PC-3 (cell line): ENCODE measurements at regions of chr17 and their contacts with region 1.

Region 1: DNA sequence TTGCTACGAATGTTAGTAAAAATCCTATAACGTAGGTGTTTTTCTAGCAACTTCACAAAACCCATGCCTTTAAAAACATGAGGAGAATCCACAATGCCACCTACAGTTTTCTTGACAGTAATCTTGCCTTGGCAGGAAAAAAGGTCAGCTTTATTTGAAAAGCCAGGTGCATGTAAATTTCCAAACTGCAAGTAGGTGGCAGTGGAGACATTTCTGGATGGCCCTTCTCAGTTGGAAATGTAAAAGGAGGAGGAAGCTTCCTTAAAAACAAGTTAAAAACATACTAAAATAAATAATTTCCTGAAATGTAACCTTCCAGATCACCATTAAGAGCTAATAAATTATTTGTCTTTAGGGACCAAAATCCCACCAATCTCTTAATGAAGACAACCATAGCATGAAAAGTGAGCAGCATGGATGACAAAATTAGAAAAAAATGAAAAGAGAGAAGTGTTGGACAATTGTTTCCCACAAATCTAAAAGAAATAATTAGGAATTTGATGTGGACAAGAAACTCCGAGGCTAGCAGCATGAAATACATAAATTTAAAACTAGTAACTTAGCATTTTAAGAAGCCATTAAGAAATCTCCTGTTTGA is 152.2 kb downstream of the SNX11 start:
- DNase-seq: peak; percentile 87
- ATAC-seq: peak; percentile 50
- H3K4me3 ChIP-seq: no peak overlapping the region
- H3K27ac ChIP-seq: no peak overlapping the region
- H3K4me1 ChIP-seq: peaks cover 17% of the 10 kb centered on the region
- H3K27me3 ChIP-seq: no peaks in the 10 kb centered on the region
- CTCF ChIP-seq: peak; percentile 95

Region 2: DNA sequence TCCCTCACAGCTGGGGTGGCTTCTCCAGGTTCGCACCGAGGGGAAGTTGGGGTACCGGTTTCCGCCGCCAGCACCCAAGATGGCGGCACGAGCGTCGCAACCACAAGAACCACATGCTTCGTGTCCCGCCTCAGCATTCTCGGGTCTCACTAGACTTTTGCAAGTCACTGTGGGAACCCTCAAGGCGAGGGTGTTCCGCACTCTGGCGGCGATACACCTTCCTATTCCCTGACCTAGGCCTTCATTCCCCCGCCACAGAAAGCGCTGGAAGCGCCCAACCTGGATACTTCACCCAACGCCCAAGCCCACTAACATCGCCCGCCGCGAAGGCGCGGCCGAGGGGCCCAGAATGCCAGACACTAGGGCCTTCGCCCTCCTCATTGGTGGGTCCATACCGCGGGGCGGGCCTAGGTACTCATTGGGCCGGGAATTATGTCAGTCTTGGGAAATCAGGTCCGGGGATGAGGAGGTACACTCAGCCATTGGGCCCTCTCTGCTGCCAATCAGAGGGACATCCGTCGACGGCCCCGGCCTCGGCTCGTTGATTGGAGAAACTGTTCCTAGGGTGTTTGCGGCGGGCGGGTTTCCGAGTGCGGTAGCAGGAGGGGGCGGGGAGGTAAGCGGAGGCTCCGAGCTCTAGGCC is 211.9 kb before region 1 on chr17 and contains the start of gene NFE2L1:
- CTCF ChIA-PET with region 1: interaction called, 19 read pairs
- POLR2A ChIA-PET with region 1: no interaction called
- intact Hi-C with region 1: no loop called
- DNase-seq: peak; percentile 100
- ATAC-seq: peak; percentile 89
- H3K4me3 ChIP-seq: peak within 1 kb of the TSS; percentile 69
- H3K27ac ChIP-seq: peak within 1 kb of the TSS; percentile 92
- H3K4me1 ChIP-seq: peaks cover 60% of the 10 kb centered on the region
- H3K27me3 ChIP-seq: no peaks in the 10 kb centered on the region
- CTCF ChIP-seq: no peak
- total RNA-seq, gene NFE2L1: 45.1 and 72.6 TPM in 2 replicates

Region 3: DNA sequence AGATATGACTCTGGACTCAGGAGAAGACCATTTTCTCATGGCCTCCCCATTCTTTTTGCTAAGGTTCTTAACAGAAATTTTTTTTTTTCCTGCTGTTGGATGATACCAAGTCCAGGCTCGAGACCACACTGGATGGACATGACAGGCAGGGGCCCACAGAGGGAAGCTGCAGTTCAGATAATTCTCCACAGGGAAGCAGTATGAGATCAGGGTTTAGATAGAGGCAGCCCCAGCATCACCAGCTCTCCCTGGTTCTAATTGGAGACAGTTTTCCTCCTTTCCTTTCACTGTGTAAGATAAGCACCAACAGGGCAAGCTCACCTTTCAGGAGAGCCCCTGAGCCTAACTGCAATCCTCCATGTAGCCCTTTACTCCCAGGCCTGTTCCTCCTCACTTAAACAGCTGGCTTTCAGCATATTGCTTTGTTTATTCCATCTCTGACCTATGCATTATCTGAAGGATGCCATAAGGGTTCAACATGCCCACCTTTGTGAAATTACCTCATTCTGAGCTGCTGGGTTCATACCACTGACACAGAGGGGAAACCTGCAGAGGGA is 44.1 kb before region 1 on chr17:
- CTCF ChIA-PET with region 1: interaction called, 25 read pairs
- POLR2A ChIA-PET with region 1: no interaction called
- intact Hi-C with region 1: loop called (anchors 1 kb)
- DNase-seq: peak; percentile 83
- ATAC-seq: peak; percentile 99
- H3K4me3 ChIP-seq: no peak overlapping the region
- H3K27ac ChIP-seq: no peak overlapping the region
- H3K4me1 ChIP-seq: no peaks in the 10 kb centered on the region
- H3K27me3 ChIP-seq: no peaks in the 10 kb centered on the region
- CTCF ChIP-seq: peak; percentile 95

Region 4: GRCh38 chr17:48290378-48290777 is 30.6 kb after region 1 on chr17:
- CTCF ChIA-PET with region 1: interaction called, 3 read pairs
- POLR2A ChIA-PET with region 1: no interaction called
- intact Hi-C with region 1: loop called (anchors 2 kb)
- DNase-seq: peak; percentile 18
- ATAC-seq: peak; percentile 40; the same call in 1 of the 2 replicates
- H3K4me3 ChIP-seq: no peak overlapping the region
- H3K27ac ChIP-seq: no peak overlapping the region
- H3K4me1 ChIP-seq: peaks cover 8% of the 10 kb centered on the region
- H3K27me3 ChIP-seq: 0 out of 2 replicates have a peak, but pooled peaks cover 2% of the 10 kb centered on the region
- CTCF ChIP-seq: no peak

Region 5: DNA sequence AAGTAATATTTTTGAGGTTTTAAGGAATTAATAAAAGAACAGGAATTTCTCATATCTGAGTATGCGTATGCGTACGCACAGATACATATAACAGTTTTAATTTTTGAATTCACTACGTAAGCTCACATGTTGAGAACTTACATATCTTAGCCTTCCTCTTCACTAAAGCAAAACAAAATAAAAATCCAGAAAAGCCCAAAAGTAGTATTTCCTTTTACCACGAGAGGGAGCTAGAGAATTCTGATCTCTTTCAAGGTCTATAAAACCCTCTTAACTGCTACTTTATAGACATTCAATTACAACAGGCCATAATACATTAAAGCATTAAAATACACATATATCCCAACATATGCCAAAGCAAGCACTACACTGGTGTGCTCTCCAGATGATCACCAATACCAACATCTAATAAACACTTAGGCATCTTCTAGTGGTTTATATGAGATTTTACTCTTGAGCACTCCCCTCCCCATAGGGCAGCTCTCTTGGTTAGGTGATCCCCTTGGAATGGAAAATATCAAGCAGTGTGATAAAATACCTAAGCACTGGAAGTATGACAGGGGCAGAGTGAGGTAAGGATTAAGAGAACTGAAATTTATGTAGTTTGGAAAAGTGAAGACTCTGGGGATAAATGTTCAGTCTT is 76.2 kb after region 1 on chr17:
- CTCF ChIA-PET with region 1: interaction called, 7 read pairs
- POLR2A ChIA-PET with region 1: no interaction called
- intact Hi-C with region 1: loop called (anchors 1 kb)
- DNase-seq: peak; percentile 96
- ATAC-seq: peak; percentile 64
- H3K4me3 ChIP-seq: no peak overlapping the region
- H3K27ac ChIP-seq: no peak overlapping the region
- H3K4me1 ChIP-seq: peaks cover 13% of the 10 kb centered on the region
- H3K27me3 ChIP-seq: no peaks in the 10 kb centered on the region; the same call in 1 of the 2 replicates
- CTCF ChIP-seq: peak; percentile 93

Region 6: DNA sequence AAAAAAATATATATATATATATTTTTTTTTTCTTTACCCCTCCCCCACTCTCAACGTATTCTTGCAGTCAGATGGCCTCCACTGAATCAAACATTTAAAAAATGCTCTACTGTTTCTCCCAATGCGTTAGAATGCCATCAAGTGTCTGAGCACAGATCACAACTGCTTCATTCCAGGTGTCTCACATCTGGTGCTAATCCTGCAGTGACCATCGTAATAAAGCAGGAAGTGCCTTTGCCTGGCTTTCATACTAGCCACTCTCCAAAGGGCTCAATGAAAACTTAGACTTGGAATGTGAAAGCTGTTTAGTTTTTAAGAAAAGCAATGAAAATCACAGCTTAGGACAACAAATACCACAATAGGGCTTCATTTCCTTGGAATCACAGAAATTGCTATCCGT is 133.1 kb after region 1 on chr17:
- CTCF ChIA-PET with region 1: no interaction called
- POLR2A ChIA-PET with region 1: no interaction called
- intact Hi-C with region 1: no loop called
- DNase-seq: no peak
- ATAC-seq: no peak
- H3K4me3 ChIP-seq: no peak overlapping the region
- H3K27ac ChIP-seq: no peak overlapping the region
- H3K4me1 ChIP-seq: no peaks in the 10 kb centered on the region
- H3K27me3 ChIP-seq: 0 out of 2 replicates have a peak, but pooled peaks cover 3% of the 10 kb centered on the region
- CTCF ChIP-seq: no peak